Activated B cell treated with CpG ODN at 0.5 μM for 24 hours (primary cell): ENCODE measurements at regions of chr12 and their contacts with region 1.

Region 1: GRCh38 chr12:27733052-27733656 is 22.5 kb downstream of the MRPS35 start:
- DNase-seq: no peak
- ATAC-seq: peak; percentile 61
- H3K4me3 Mint-ChIP-seq: no peak overlapping the region
- H3K27ac Mint-ChIP-seq: no peak overlapping the region
- H3K4me1 Mint-ChIP-seq: no peaks in the 10 kb centered on the region
- H3K27me3 Mint-ChIP-seq: no peaks in the 10 kb centered on the region
- CTCF ChIP-seq: no peak

Region 2: GRCh38 chr12:27703710-27704452 is 29.3 kb before region 1 on chr12:
- CTCF ChIA-PET with region 1: no interaction called
- POLR2A ChIA-PET with region 1: no interaction called
- intact Hi-C with region 1: no loop called
- DNase-seq: no peak
- ATAC-seq: peak; percentile 92
- H3K4me3 Mint-ChIP-seq: no peak overlapping the region
- H3K27ac Mint-ChIP-seq: no peak overlapping the region
- H3K4me1 Mint-ChIP-seq: no peaks in the 10 kb centered on the region
- H3K27me3 Mint-ChIP-seq: peaks cover 9% of the 10 kb centered on the region
- CTCF ChIP-seq: no peak

Region 3: DNA sequence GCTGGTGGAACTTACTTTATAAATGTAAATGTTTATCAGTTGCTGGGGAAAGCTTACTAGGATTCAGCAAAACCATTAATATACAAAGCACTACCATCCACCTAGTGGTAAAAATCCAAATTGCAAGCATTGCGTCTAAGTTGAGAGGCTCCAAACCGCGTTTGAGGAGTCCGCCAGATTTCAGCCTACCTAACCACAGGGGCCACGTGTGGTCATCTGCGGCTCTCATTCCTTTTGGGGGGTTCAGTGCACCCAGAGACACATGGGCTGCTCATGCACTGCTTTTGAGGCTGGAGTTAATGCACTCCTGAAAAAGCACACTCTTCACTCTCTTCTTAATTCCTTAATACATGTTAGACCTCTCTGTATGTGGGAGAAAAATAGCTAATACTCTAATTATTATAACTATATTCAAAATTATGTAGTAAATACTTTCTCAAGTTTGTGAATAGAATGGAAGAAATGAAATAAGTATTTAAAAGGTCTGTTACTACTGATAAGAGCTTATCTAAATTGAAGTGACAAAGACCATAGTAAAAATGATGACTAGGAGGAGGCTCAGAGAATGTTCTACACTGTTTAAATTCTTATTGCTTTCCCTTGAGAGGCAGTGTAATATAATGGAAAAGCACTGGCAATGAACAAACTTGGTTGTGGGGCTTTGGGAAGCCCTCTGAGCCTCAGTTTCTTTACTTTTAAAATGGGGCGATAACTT is 88.3 kb after region 1 on chr12:
- CTCF ChIA-PET with region 1: interaction called, 19 read pairs
- POLR2A ChIA-PET with region 1: no interaction called
- intact Hi-C with region 1: loop called (anchors 1 kb)
- DNase-seq: peak; percentile 24
- ATAC-seq: peak; percentile 25
- H3K4me3 Mint-ChIP-seq: peak overlapping the region; percentile 66
- H3K27ac Mint-ChIP-seq: peak overlapping the region; percentile 73
- H3K4me1 Mint-ChIP-seq: peaks cover 38% of the 10 kb centered on the region
- H3K27me3 Mint-ChIP-seq: peaks cover 2% of the 10 kb centered on the region
- CTCF ChIP-seq: peak; percentile 43